Dorsolateral prefrontal cortex (tissue), 120 donors: ENCODE measurements at regions of chr17 and their contacts with region 1.

Region 1: GRCh38 chr17:3927628-3928340 is 11.5 kb upstream of the P2RX1 start:
- DNase-seq: no peak
- H3K4me3 ChIP-seq: no peak overlapping the region
- H3K27ac ChIP-seq: no peak overlapping the region
- H3K27me3 ChIP-seq: no peaks in the 10 kb centered on the region
- CTCF ChIP-seq: no peak

Region 2: GRCh38 chr17:3965118-3965803 is 37.5 kb after region 1 on chr17:
- intact Hi-C with region 1: no loop called
- DNase-seq: peak in 1 of 10 donors; percentile 36
- H3K4me3 ChIP-seq: peak overlapping the region in 34 of 59 donors; percentile 12 to 58 (median 38)
- H3K27ac ChIP-seq: no peak overlapping the region
- H3K27me3 ChIP-seq: peaks cover 0 to 65% (median 41%) of the 10 kb centered on the region in 45 donors
- CTCF ChIP-seq: no peak

Region 3: GRCh38 chr17:4074831-4075495 is 147.2 kb after region 1 on chr17:
- intact Hi-C with region 1: loop called in 1 of 2 experiments (anchors 10 kb)
- DNase-seq: no peak
- H3K4me3 ChIP-seq: no peak overlapping the region
- H3K27ac ChIP-seq: peak overlapping the region in 29 of 59 donors; percentile 5 to 76 (median 38)
- H3K27me3 ChIP-seq: no peaks in the 10 kb centered on the region
- CTCF ChIP-seq: peak in 55 of 56 donors; percentile 32 to 74 (median 64)

Region 4: GRCh38 chr17:4530799-4531730 is 603.3 kb after region 1 on chr17:
- intact Hi-C with region 1: no loop called
- DNase-seq: peak in 2 of 10 donors; percentile 51 to 72
- H3K4me3 ChIP-seq: peak overlapping the region in 1 of 59 donors; percentile 7
- H3K27ac ChIP-seq: peak overlapping the region; percentile 70 to 100 (median 98)
- H3K27me3 ChIP-seq: no peaks in the 10 kb centered on the region
- CTCF ChIP-seq: no peak